ENCODE measurements at regions of chr15 and their contacts with region 1.

Region 1: GRCh38 chr15:51203797-51204196 is 109.1 kb upstream of the TNFAIP8L3 start:
- DNase-seq: peak; percentile 68
- H3K4me3 ChIP-seq: no peak overlapping the region
- H3K27me3 ChIP-seq: peaks cover 2% of the 10 kb centered on the region; the same call in 1 of the 2 replicates
- CTCF ChIP-seq: no peak

Region 2: GRCh38 chr15:51218299-51218938 is 14.6 kb after region 1 on chr15:
- CTCF ChIA-PET with region 1: interaction called, 11 read pairs
- POLR2A ChIA-PET with region 1: no interaction called
- DNase-seq: no peak
- H3K4me3 ChIP-seq: no peak overlapping the region
- H3K27me3 ChIP-seq: no peaks in the 10 kb centered on the region
- CTCF ChIP-seq: no peak

Region 3: DNA sequence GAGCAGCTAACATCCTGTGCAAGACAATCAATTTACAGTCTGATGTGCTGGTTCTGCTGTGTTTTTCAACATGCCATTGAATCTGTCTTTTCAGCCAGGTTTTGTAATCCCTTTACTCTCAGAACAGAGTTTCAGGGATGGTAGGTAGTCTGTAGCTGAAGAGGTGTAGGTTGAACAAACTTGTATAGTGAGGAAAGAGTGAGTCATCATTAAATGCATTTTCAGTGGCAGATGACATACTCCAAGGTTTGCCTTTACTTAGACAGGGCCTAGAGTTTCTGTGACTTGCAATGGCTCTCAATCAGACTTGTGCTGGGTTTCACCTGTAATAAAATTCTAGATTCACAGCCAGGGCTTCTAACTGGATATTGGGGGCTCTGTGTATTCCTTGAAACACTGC is 40.0 kb after region 1 on chr15:
- CTCF ChIA-PET with region 1: no interaction called
- POLR2A ChIA-PET with region 1: no interaction called
- DNase-seq: no peak
- H3K4me3 ChIP-seq: no peak overlapping the region
- H3K27me3 ChIP-seq: peaks cover 7% of the 10 kb centered on the region; the same call in 1 of the 2 replicates
- CTCF ChIP-seq: no peak

Region 4: DNA sequence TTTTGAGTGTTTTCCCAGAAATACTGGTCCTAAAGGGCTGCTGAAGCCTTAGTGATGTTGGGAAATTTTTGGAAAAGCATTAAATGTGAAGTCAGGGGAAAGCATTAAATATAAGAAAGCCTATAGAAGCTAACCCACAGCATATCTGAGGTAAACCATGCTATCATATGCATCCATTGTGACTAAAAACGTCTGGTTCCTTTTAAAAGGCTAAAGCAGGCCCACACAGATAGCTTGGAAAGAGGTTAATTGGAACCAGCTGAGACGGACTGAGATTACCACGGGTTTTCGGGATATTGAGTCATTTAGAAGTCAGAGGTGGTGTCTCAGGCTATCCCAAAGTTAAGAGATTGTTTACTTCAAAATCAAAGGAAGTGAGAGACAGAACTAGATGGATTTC is 56.4 kb after region 1 on chr15:
- CTCF ChIA-PET with region 1: no interaction called
- POLR2A ChIA-PET with region 1: no interaction called
- DNase-seq: peak; percentile 55
- H3K4me3 ChIP-seq: no peak overlapping the region
- H3K27me3 ChIP-seq: peaks cover 3% of the 10 kb centered on the region; the same call in 1 of the 2 replicates
- CTCF ChIP-seq: no peak

Measured in BJ (cell line).